ENCODE measurements at regions of chr16 and their contacts with region 1.

Region 1: GRCh38 chr16:68264128-68265077 is at the start of gene SLC7A6:
- DNase-seq: peak; percentile 59 to 94 (median 76)
- ATAC-seq: peak; percentile 69
- H3K4me3 ChIP-seq: peak within 1 kb of the TSS; percentile 74
- H3K4me3 Mint-ChIP-seq: peak within 1 kb of the TSS; percentile 98
- H3K27ac ChIP-seq: peak within 1 kb of the TSS; percentile 96 to 99
- H3K27ac Mint-ChIP-seq: peak within 1 kb of the TSS; percentile 94
- H3K4me1 ChIP-seq: peaks cover 62% of the 10 kb centered on the region
- H3K4me1 Mint-ChIP-seq: peaks cover 62% of the 10 kb centered on the region
- H3K27me3 ChIP-seq: no peaks in the 10 kb centered on the region
- H3K27me3 Mint-ChIP-seq: no peaks in the 10 kb centered on the region
- CTCF ChIP-seq: peak; percentile 63
- total RNA-seq, gene SLC7A6: 187 to 197 TPM

Region 2: GRCh38 chr16:68179196-68179795 is 85.1 kb before region 1 on chr16:
- CTCF ChIA-PET with region 1: no interaction called
- POLR2A ChIA-PET with region 1: no interaction called
- intact Hi-C with region 1: no loop called
- DNase-seq: no peak
- ATAC-seq: no peak
- H3K4me3 ChIP-seq: no peak overlapping the region
- H3K4me3 Mint-ChIP-seq: no peak overlapping the region
- H3K27ac ChIP-seq: no peak overlapping the region
- H3K27ac Mint-ChIP-seq: peak overlapping the region; percentile 70
- H3K4me1 ChIP-seq: no peaks in the 10 kb centered on the region
- H3K4me1 Mint-ChIP-seq: peaks cover 12% of the 10 kb centered on the region
- H3K27me3 ChIP-seq: no peaks in the 10 kb centered on the region
- H3K27me3 Mint-ChIP-seq: no peaks in the 10 kb centered on the region
- CTCF ChIP-seq: no peak

Region 3: GRCh38 chr16:68244903-68245853 is 19.2 kb before region 1 on chr16 and contains the start of gene PLA2G15:
- CTCF ChIA-PET with region 1: interaction called, 12 read pairs
- POLR2A ChIA-PET with region 1: interaction called, 13 read pairs
- intact Hi-C with region 1: loop called in 1 of 2 experiments (anchors 1 kb)
- DNase-seq: peak; percentile 94 to 99 (median 96)
- ATAC-seq: peak; percentile 99
- H3K4me3 ChIP-seq: peak within 1 kb of the TSS; percentile 94
- H3K4me3 Mint-ChIP-seq: peak within 1 kb of the TSS; percentile 99
- H3K27ac ChIP-seq: peak within 1 kb of the TSS in 1 of 2 donors; percentile 21
- H3K27ac Mint-ChIP-seq: peak within 1 kb of the TSS; percentile 50
- H3K4me1 ChIP-seq: peaks cover 29% of the 10 kb centered on the region
- H3K4me1 Mint-ChIP-seq: peaks cover 17% of the 10 kb centered on the region
- H3K27me3 ChIP-seq: no peaks in the 10 kb centered on the region
- H3K27me3 Mint-ChIP-seq: no peaks in the 10 kb centered on the region
- CTCF ChIP-seq: no peak
- total RNA-seq, gene PLA2G15: 4.3 to 4.7 TPM

Region 4: GRCh38 chr16:68275611-68276191 is 11.3 kb after region 1 on chr16:
- CTCF ChIA-PET with region 1: interaction called, 278 read pairs
- POLR2A ChIA-PET with region 1: interaction called, 271 read pairs
- intact Hi-C with region 1: loop called in 1 of 2 experiments (anchors 1 kb)
- DNase-seq: peak in 13 of 14 experiments; percentile 36 to 87 (median 55)
- ATAC-seq: peak; percentile 75
- H3K4me3 ChIP-seq: peak overlapping the region; percentile 5
- H3K4me3 Mint-ChIP-seq: peak overlapping the region; percentile 66
- H3K27ac ChIP-seq: peak overlapping the region; percentile 71 to 74
- H3K27ac Mint-ChIP-seq: peak overlapping the region; percentile 94
- H3K4me1 ChIP-seq: peaks cover 93% of the 10 kb centered on the region
- H3K4me1 Mint-ChIP-seq: peaks cover 73% of the 10 kb centered on the region
- H3K27me3 ChIP-seq: no peaks in the 10 kb centered on the region
- H3K27me3 Mint-ChIP-seq: no peaks in the 10 kb centered on the region
- CTCF ChIP-seq: no peak

Region 5: GRCh38 chr16:68289621-68290329 is 25.4 kb after region 1 on chr16:
- CTCF ChIA-PET with region 1: interaction called, 278 read pairs
- POLR2A ChIA-PET with region 1: interaction called, 271 read pairs
- intact Hi-C with region 1: loop called (anchors 1 kb)
- DNase-seq: peak in 10 of 14 experiments; percentile 27 to 68 (median 40)
- ATAC-seq: peak; percentile 38
- H3K4me3 ChIP-seq: no peak overlapping the region
- H3K4me3 Mint-ChIP-seq: peak overlapping the region; percentile 70
- H3K27ac ChIP-seq: peak overlapping the region; percentile 74 to 83
- H3K27ac Mint-ChIP-seq: peak overlapping the region; percentile 87
- H3K4me1 ChIP-seq: peaks cover 93% of the 10 kb centered on the region
- H3K4me1 Mint-ChIP-seq: peaks cover 87% of the 10 kb centered on the region
- H3K27me3 ChIP-seq: no peaks in the 10 kb centered on the region
- H3K27me3 Mint-ChIP-seq: no peaks in the 10 kb centered on the region
- CTCF ChIP-seq: no peak

Region 6: DNA sequence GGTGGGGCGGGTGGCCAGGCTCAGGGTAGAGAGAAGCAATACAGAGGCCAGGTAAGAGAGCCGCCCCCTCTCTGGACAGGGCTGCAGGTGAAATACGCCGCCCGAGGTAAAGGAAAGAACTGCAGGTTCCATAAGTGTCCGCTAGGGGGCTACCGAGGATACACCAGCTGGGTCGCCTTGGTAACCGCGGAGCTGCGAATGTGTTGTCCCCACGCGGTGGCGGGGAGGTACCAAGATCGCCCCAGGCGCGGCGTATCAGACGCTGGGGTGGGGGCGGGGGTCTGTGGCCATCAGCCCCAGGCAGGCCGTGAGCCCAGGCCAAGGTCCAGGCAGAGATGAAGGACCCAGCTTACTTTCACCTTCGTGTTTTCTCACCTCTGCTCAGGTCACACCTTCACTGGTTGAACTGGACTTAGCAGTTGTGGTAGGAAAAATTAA is 256.3 kb after region 1 on chr16:
- CTCF ChIA-PET with region 1: no interaction called
- POLR2A ChIA-PET with region 1: no interaction called
- intact Hi-C with region 1: loop called in 1 of 2 experiments (anchors 5 kb)
- DNase-seq: peak; percentile 77 to 95 (median 83)
- ATAC-seq: peak; percentile 98
- H3K4me3 ChIP-seq: peak overlapping the region; percentile 26
- H3K4me3 Mint-ChIP-seq: peak overlapping the region; percentile 43
- H3K27ac ChIP-seq: no peak overlapping the region
- H3K27ac Mint-ChIP-seq: peak overlapping the region; percentile 71
- H3K4me1 ChIP-seq: peaks cover 10% of the 10 kb centered on the region
- H3K4me1 Mint-ChIP-seq: peaks cover 7% of the 10 kb centered on the region
- H3K27me3 ChIP-seq: no peaks in the 10 kb centered on the region
- H3K27me3 Mint-ChIP-seq: peaks cover 5% of the 10 kb centered on the region
- CTCF ChIP-seq: peak; percentile 99

Measured in CD4-positive, alpha-beta T cell (primary cell).